Activated CD4-positive, alpha-beta memory T cell treated with anti-CD3 and anti-CD28 coated beads, Interleukin-2, amount 10 ng/mL, durations not matched to agents 7 days and 5 days (primary cell): ENCODE measurements at regions of chr5 and their contacts with region 1.

Region 1: DNA sequence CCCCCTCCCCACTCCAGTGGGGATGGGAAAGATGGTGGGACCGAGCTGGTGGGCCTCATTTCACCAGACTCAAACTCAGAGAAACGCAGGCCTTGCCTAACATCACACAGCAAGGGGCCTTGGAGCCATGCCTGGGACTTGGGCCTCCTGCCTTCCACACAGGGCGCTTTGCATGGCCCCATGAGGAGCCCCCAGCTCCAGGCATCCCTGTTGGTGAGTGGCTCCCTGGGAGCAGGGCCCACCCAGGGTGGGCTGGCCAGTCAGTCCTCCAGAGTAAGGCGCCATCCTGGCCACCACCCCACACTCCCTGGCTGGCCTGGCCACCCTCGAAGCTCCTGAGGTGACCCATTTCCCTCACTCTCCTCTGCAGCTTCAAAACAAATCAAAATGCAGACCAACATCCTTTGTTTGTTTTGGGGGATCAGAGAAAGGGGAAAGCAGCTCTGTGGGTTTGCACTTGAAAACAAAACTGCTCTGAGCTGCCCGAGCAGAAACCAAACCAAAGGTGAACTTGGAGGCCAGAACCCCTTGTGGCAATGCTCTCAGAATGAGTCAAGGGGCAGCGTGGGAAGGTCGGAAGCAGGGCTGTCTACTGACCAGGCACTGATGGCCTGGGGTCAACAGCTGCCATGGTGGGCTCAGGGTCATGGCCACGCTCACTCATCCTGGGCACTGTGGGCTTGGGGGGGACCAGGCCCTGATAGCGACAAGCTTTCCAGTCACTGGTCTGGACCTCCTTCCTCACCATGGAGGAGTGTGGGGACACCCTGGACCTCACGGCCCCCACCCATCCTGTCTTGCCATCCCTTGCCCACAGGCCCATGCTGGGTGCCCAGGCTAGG is 37.0 kb upstream of the VDAC1 start:
- DNase-seq: no peak
- H3K4me3 Mint-ChIP-seq: no peak overlapping the region
- H3K27ac Mint-ChIP-seq: no peak overlapping the region
- H3K4me1 Mint-ChIP-seq: peaks cover 5% of the 10 kb centered on the region
- H3K27me3 Mint-ChIP-seq: peaks cover 11% of the 10 kb centered on the region

Region 2: GRCh38 chr5:133944263-133945185 is 97.3 kb before region 1 on chr5:
- CTCF ChIA-PET with region 1: no interaction called
- POLR2A ChIA-PET with region 1: no interaction called
- DNase-seq: peak; percentile 34
- H3K4me3 Mint-ChIP-seq: no peak overlapping the region
- H3K27ac Mint-ChIP-seq: no peak overlapping the region
- H3K4me1 Mint-ChIP-seq: peaks cover 3% of the 10 kb centered on the region
- H3K27me3 Mint-ChIP-seq: no peaks in the 10 kb centered on the region

Region 3: GRCh38 chr5:134004592-134005375 is 37.0 kb before region 1 on chr5 and contains the start of gene VDAC1:
- CTCF ChIA-PET with region 1: interaction called, 18 read pairs
- POLR2A ChIA-PET with region 1: interaction called, 4 read pairs
- DNase-seq: peak; percentile 87
- H3K4me3 Mint-ChIP-seq: peak within 1 kb of the TSS; percentile 88
- H3K27ac Mint-ChIP-seq: peak within 1 kb of the TSS; percentile 90
- H3K4me1 Mint-ChIP-seq: peaks cover 43% of the 10 kb centered on the region
- H3K27me3 Mint-ChIP-seq: no peaks in the 10 kb centered on the region
- total RNA-seq, gene VDAC1: 216 to 218 TPM

Region 4: DNA sequence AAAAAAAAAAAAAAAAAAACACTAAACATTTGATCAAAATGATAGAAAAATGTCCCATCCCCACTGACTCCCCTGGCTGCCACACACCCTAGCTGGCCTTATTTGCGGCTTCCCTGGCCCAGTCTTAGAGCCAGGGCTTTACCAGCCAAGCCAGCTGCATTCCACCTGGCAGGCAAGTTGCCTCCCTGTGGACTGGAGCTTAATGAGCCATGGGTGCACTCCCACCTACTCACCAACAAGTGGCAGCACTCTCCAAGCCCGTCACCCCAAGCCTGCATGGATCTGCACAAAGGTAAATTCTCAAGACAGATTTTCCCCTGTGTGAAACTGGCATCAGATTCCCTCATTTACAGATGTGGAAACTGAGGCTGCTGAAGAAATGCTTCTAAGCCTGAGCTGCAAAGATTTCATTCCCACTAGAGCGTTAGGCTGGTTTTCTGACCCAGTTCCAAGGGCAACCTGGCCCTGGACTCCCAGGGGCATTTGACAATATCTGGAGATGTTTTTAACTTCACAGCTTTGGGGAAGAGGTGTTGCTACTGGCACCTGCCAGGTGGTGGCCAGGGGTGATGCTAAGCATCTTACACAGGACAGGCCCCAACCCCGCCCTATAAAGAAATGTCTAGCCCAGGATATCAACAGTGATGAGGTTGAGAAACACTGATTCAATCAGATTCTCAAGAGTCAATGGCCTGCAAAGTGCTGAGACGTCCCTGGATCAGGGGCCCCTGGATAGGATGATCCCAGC is 15.1 kb before region 1 on chr5:
- CTCF ChIA-PET with region 1: interaction called, 20 read pairs
- POLR2A ChIA-PET with region 1: no interaction called
- DNase-seq: peak; percentile 50
- H3K4me3 Mint-ChIP-seq: no peak overlapping the region
- H3K27ac Mint-ChIP-seq: no peak overlapping the region
- H3K4me1 Mint-ChIP-seq: no peaks in the 10 kb centered on the region
- H3K27me3 Mint-ChIP-seq: peaks cover 16% of the 10 kb centered on the region

Region 5: GRCh38 chr5:134063188-134063820 is 21.5 kb after region 1 on chr5:
- CTCF ChIA-PET with region 1: interaction called, 14 read pairs
- POLR2A ChIA-PET with region 1: no interaction called
- DNase-seq: no peak
- H3K4me3 Mint-ChIP-seq: no peak overlapping the region
- H3K27ac Mint-ChIP-seq: no peak overlapping the region
- H3K4me1 Mint-ChIP-seq: no peaks in the 10 kb centered on the region
- H3K27me3 Mint-ChIP-seq: peaks cover 15% of the 10 kb centered on the region

Region 6: GRCh38 chr5:134119720-134120119 is 77.9 kb after region 1 on chr5:
- CTCF ChIA-PET with region 1: interaction called, 16 read pairs
- POLR2A ChIA-PET with region 1: interaction called, 3 read pairs
- DNase-seq: no peak
- H3K4me3 Mint-ChIP-seq: no peak overlapping the region
- H3K27ac Mint-ChIP-seq: no peak overlapping the region
- H3K4me1 Mint-ChIP-seq: peaks cover 61% of the 10 kb centered on the region
- H3K27me3 Mint-ChIP-seq: peaks cover 61% of the 10 kb centered on the region

Region 7: DNA sequence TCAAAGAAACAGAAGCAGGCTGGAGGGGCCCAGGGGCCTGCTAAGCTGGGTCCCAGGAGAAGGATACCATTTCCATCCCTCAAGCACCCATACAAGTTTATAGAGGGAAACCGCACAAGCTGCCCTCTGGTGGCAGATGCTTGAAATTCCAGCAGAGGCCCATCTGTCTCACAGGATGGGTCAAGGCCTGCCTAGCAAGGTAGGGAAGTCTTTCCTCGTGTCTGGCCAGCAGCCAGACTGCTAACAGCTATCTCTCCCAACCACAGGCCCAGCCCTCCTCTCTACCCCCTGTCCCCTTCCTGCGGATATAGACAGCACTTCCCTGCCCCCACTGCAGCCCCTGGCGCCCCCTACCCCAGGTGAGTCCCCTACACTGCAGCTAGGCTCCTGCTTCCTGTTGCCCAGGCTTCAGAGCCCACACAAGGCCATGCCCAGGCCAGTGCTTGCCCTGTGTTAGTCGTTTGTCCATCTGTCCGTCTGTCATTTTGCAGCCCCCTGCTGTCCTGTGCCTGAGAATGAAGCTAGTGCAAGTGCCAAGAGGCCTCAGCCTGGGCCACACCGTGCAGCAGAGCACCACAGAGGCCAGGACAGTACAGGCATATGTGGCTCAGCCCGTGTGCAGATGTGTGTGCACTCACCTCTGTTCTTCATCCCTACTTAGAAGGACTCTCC is 98.9 kb after region 1 on chr5:
- CTCF ChIA-PET with region 1: interaction called, 348 read pairs
- POLR2A ChIA-PET with region 1: interaction called, 10 read pairs
- DNase-seq: peak; percentile 71
- H3K4me3 Mint-ChIP-seq: no peak overlapping the region
- H3K27ac Mint-ChIP-seq: no peak overlapping the region
- H3K4me1 Mint-ChIP-seq: peaks cover 34% of the 10 kb centered on the region
- H3K27me3 Mint-ChIP-seq: peaks cover 7% of the 10 kb centered on the region